GM10248 (cell line): ENCODE measurements at regions of chr16 and their contacts with region 1.

Region 1: GRCh38 chr16:10964039-10964890 is 19.9 kb downstream of the CLEC16A start:
- DNase-seq: peak; percentile 75
- CTCF ChIP-seq: peak; percentile 95

Region 2: DNA sequence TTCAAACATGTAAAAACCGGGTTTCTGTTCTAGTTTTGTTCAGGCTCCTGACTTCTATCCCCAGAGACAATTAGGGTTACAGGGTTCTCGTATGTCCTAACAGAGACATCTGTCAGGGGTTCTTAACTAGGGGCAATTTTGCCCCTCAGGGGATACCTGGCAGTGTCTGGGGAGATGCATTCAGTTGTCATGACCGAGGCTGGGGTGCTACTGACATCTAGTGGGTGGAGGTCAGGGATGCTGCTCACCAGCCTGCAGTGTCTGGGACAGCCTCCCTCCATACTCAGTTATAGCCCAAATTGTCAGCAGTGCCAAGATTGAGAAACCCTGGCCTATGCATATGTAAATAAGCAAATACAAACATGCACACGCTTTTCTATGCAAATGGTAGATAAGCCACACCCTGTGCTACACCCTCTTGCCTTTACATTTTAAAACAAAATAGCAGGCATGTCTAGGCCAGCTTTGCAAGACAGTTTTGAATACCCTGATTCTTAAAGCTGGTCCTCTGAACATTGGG is 17.5 kb after region 1 on chr16:
- CTCF ChIA-PET with region 1: interaction called, 124 read pairs
- POLR2A ChIA-PET with region 1: no interaction called
- DNase-seq: peak; percentile 71
- CTCF ChIP-seq: peak; percentile 76

Region 3: DNA sequence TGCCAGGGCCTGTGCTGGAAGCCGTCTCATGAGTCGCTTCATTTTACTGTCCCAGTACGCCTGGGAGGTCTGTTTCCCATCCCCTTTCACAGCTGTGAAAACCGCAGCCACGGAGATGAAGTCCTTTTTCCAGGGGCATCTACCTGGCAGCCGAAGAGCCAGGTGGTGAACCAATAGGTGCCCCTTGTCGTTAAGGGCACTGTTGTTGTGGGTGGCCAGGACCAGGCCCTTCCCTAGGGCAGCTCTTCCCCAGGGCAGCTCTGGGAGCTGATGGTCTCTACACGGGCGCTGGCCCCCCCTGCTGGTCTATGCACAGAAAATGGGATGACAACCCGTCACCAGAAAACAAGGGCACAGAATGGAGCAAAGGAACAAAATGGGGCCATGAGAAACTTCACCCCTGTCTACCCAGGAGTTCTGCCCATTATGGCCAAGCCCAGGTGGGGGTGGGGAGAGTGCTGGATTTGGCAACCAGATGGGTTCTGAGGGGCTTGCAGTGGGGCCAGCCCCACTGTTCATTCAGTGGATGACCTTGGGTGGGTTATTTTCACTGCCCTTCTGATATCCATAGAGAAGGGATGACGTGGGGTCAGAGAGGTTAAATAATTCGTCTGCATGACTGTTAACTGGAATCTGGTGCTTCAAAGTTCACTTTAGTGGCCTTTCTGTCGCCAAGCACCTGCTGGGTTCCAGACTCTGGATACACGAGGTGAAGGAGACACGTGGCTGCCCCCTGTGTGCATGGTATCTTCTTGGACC is 392.5 kb after region 1 on chr16:
- CTCF ChIA-PET with region 1: interaction called, 42 read pairs
- POLR2A ChIA-PET with region 1: interaction called, 3 read pairs
- DNase-seq: peak; percentile 69
- CTCF ChIP-seq: peak; percentile 69

Region 4: GRCh38 chr16:11386791-11387546 is 422.7 kb after region 1 on chr16:
- CTCF ChIA-PET with region 1: interaction called, 28 read pairs
- POLR2A ChIA-PET with region 1: interaction called, 3 read pairs
- DNase-seq: no peak
- CTCF ChIP-seq: peak; percentile 25